Calu3 (cell line): ENCODE measurements at regions of chr5 and their contacts with region 1.

Region 1: GRCh38 chr5:95664204-95664786 is 17.7 kb downstream of the RFESD start:
- DNase-seq: peak; percentile 31
- H3K4me3 Mint-ChIP-seq: no peak overlapping the region
- H3K27ac Mint-ChIP-seq: no peak overlapping the region
- H3K4me1 Mint-ChIP-seq: no peaks in the 10 kb centered on the region
- H3K27me3 Mint-ChIP-seq: no peaks in the 10 kb centered on the region
- CTCF ChIP-seq: peak; percentile 62

Region 2: DNA sequence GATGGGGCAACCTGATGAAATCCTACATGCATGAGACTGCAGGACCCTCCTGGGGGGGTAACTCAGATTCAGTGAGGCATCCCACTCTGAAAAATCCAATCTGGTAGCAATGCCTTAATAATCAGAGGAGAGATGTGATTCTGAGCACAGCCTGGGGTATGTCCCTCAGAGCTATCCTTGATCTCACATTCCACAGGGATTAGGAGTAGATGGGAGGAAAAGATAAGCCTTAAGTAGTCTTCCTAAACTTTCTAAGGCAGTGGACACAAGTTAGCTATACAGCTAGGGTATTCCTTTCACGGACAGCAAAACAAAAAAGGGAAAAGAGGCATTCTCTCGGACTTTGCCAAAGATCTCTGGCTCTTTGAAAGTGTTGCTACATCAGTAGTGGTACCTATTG is 22.4 kb after region 1 on chr5:
- CTCF ChIA-PET with region 1: no interaction called
- intact Hi-C with region 1: no loop called
- DNase-seq: no peak
- H3K4me3 Mint-ChIP-seq: no peak overlapping the region
- H3K27ac Mint-ChIP-seq: no peak overlapping the region
- H3K4me1 Mint-ChIP-seq: no peaks in the 10 kb centered on the region
- H3K27me3 Mint-ChIP-seq: peaks cover 12% of the 10 kb centered on the region
- CTCF ChIP-seq: no peak

Region 3: GRCh38 chr5:95730730-95731570 is 66.7 kb after region 1 on chr5 and contains the start of gene RHOBTB3:
- CTCF ChIA-PET with region 1: interaction called, 5 read pairs
- intact Hi-C with region 1: loop called (anchors 2 kb)
- DNase-seq: peak; percentile 85
- H3K4me3 Mint-ChIP-seq: peak within 1 kb of the TSS; percentile 95
- H3K27ac Mint-ChIP-seq: peak within 1 kb of the TSS; percentile 86
- H3K4me1 Mint-ChIP-seq: peaks cover 54% of the 10 kb centered on the region
- H3K27me3 Mint-ChIP-seq: no peaks in the 10 kb centered on the region
- CTCF ChIP-seq: no peak
- total RNA-seq, gene RHOBTB3: 29.5 and 41.1 TPM in 2 replicates

Region 4: DNA sequence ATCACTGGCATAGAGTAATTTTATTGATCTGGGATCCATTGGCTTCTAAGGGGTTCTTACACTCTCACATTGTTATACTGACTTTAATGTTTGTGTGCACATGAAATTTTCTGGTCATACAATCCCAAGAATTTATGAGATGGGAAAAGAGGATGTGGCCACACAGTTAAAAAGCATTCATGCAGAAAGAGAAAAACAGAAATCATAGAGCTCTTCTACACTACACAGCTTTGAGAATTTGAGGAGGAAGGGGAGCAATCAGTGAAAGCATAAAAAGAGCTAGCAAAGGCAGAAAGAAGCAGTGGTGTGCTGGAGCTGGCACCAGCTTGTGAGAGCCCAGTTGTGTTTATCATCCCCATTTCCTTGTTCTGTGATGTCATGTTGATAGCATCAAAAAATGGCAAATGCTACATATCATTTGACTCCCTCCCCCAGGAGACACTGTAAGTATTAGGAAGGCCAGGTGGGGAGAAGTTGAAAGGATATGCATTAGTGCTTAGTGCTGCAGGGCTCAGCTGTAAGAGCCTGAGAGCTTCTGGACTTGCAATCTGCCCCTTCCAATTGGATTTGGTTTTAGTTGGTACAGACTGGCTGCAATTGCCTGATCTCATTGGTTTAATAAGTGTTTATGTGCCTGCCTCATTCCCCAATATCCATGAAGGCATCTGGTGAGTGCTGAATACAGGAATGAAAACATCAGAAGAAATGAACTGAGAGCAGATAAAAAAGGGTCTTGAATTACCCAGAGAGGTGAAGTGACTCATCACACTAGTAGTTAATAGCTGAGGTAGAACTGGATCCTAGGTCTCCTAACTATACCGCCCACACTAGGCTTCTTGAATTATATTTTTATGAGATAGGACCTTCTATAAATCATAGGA is 97.7 kb after region 1 on chr5:
- CTCF ChIA-PET with region 1: no interaction called
- intact Hi-C with region 1: loop called (anchors 2 kb)
- DNase-seq: no peak
- H3K4me3 Mint-ChIP-seq: no peak overlapping the region
- H3K27ac Mint-ChIP-seq: no peak overlapping the region
- H3K4me1 Mint-ChIP-seq: peaks cover 37% of the 10 kb centered on the region
- H3K27me3 Mint-ChIP-seq: no peaks in the 10 kb centered on the region
- CTCF ChIP-seq: no peak

Region 5: DNA sequence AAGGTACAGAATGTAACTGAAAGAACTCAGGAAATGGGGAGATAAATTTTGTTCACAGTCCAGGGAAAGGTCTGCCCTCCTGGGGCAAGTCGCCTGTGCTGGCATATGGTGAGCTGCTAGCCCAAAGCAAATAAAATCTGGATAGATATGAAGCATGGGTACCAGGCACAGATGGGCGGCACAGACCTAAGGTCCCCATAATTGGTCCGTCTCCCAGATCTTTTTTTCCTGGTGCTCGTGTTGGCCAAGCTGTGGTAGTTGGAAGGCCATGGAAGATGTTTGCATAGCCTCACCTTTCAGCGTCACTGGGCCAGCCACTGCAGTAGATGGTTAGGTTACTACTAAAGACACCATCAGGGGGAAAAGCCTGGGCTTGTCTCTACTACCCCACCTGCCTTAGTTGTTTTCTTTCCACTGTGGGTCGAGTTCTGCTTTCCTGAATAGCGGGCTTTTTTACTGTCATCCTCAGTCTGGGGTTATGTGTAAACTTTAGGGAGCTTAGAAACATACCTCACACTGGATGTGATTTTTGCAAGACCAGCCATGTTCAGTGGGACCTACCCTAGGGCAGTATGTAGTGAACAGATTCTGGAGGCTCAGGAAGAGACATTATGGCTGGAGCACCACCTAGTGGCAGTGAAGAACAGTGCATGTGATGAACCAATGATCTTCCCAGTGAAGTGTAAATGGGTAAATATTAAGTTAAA is 182.4 kb after region 1 on chr5:
- CTCF ChIA-PET with region 1: no interaction called
- intact Hi-C with region 1: loop called (anchors 1 kb)
- DNase-seq: peak; percentile 76
- H3K4me3 Mint-ChIP-seq: no peak overlapping the region
- H3K27ac Mint-ChIP-seq: no peak overlapping the region
- H3K4me1 Mint-ChIP-seq: peaks cover 15% of the 10 kb centered on the region
- H3K27me3 Mint-ChIP-seq: no peaks in the 10 kb centered on the region
- CTCF ChIP-seq: peak; percentile 83